Activated CD4-positive, alpha-beta memory T cell treated with anti-CD3 and anti-CD28 coated beads for 36 hours (primary cell): ENCODE measurements at regions of chr10 and their contacts with region 1.

Region 1: DNA sequence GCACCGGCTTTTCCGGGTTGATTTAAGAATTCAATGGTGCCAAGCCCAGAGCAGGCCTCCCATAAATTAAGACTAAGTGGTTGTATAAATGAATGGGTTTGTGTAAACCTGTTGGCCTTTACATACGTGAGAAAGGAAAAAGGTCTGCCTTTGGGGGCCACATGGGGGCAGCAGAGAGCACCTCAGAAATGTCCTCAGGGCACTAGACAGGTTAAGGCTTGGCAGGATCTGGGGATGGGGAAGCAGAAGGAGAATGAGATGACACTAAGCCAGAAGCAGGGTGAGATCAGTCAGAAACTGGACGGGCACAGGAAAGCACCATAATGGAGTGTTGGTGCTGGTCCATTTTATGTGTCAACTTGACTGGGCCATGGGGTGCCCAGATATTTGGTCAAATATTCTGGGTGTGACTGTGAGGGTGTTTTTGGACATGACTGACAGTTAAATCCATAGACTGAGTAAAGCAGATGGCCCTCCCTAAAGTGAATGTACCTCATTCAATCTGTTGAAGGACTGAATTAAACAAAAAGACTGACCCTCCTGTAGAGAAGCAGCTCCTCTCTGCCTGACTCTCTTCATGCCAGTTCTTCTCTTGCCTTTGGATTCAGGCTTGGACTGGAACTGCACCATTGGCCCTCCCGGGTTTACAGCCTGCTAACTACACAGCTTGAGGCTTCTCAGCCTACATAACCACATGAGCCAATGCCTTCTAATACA is 58.9 kb downstream of the FRMPD2 start:
- DNase-seq: peak; percentile 58
- H3K4me3 Mint-ChIP-seq: no peak overlapping the region
- H3K27ac Mint-ChIP-seq: no peak overlapping the region
- H3K4me1 Mint-ChIP-seq: no peaks in the 10 kb centered on the region
- H3K27me3 Mint-ChIP-seq: peaks cover 10% of the 10 kb centered on the region

Region 2: GRCh38 chr10:48289501-48290238 is 74.0 kb after region 1 on chr10:
- CTCF ChIA-PET with region 1: interaction called, 18 read pairs
- POLR2A ChIA-PET with region 1: no interaction called
- intact Hi-C with region 1: loop called (anchors 1 kb)
- DNase-seq: peak; percentile 60
- H3K4me3 Mint-ChIP-seq: no peak overlapping the region
- H3K27ac Mint-ChIP-seq: no peak overlapping the region
- H3K4me1 Mint-ChIP-seq: peaks cover 7% of the 10 kb centered on the region
- H3K27me3 Mint-ChIP-seq: peaks cover 11% of the 10 kb centered on the region

Region 3: DNA sequence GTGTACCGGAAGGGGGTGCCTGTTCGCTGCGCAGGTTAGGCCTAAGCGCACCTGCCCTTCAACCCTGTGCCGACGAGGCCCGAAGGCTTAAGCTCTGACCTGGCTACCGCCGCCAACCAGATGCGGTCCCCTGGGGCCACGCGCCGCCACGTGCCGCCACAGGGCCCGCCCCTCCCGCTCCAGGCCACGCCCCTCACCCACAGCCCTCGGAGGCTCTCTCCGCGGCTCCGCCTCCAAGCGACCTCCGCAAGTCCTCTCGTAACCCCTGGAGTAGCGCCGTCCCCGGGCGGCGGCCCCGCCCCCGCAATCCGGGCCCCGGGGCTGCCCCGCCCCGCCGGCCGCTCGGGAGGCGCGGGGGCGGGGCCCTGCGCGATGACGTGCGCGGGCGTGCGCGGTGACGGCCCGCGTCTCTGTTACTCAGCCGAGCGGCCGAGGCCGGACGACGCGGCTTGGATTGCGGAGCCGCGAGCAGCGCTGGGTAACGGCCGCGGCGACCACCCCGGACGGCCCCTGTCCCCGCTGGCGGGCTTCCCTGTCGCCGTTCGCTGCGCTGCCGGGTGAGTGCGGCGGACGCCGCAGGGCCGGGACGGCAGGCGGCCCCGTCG is 90.7 kb after region 1 on chr10 and contains the start of gene MAPK8:
- CTCF ChIA-PET with region 1: no interaction called
- POLR2A ChIA-PET with region 1: no interaction called
- intact Hi-C with region 1: no loop called
- DNase-seq: peak; percentile 92
- H3K4me3 Mint-ChIP-seq: peak within 1 kb of the TSS; percentile 84
- H3K27ac Mint-ChIP-seq: peak within 1 kb of the TSS; percentile 58
- H3K4me1 Mint-ChIP-seq: peaks cover 34% of the 10 kb centered on the region
- H3K27me3 Mint-ChIP-seq: no peaks in the 10 kb centered on the region
- total RNA-seq, gene MAPK8: 44.2 to 45.4 TPM

Region 4: DNA sequence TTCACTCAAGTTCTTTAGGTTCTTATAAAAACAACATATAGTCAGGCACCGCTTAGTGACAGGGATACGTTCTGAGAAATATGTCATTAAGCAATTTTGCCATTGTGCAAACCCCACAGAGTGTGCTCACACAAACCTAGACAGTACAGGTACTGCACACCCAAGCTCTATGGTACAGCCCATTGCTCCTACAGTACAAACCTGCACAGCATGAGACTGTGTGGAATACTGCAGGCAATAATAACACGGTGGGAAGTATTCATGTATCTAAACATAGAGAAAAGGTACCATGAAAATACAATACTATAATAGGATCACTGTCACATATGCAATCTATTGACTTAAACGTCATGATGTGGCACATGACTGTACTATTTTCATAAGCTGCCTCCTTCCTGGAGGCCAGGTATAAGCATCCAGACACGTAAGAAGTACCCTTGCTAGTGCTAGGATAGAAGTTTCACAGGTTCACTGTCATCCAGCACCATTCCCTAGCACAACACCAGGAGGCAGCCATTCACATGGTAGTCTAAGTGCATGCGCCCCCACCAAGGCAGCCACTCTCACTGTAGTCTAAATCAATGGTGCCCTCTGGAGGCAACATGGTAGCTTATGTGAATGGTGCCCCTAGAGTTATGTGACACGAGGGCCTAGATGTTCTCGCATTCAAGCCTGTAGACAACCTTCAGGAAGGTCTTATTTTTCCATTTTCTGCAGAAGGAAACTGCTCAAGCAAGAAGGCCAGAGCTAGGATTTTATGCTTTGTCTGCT is 290.7 kb after region 1 on chr10:
- CTCF ChIA-PET with region 1: no interaction called
- POLR2A ChIA-PET with region 1: no interaction called
- intact Hi-C with region 1: loop called (anchors 10 kb)
- DNase-seq: peak; percentile 21
- H3K4me3 Mint-ChIP-seq: no peak overlapping the region
- H3K27ac Mint-ChIP-seq: no peak overlapping the region
- H3K4me1 Mint-ChIP-seq: no peaks in the 10 kb centered on the region
- H3K27me3 Mint-ChIP-seq: peaks cover 1% of the 10 kb centered on the region